ENCODE measurements at regions of chr19 and their contacts with region 1.

Region 1: GRCh38 chr19:588093-588740 is 1.5 kb upstream of the HCN2 start:
- DNase-seq: no peak
- H3K4me3 ChIP-seq: no peak overlapping the region
- CTCF ChIP-seq: peak; percentile 81

Region 2: DNA sequence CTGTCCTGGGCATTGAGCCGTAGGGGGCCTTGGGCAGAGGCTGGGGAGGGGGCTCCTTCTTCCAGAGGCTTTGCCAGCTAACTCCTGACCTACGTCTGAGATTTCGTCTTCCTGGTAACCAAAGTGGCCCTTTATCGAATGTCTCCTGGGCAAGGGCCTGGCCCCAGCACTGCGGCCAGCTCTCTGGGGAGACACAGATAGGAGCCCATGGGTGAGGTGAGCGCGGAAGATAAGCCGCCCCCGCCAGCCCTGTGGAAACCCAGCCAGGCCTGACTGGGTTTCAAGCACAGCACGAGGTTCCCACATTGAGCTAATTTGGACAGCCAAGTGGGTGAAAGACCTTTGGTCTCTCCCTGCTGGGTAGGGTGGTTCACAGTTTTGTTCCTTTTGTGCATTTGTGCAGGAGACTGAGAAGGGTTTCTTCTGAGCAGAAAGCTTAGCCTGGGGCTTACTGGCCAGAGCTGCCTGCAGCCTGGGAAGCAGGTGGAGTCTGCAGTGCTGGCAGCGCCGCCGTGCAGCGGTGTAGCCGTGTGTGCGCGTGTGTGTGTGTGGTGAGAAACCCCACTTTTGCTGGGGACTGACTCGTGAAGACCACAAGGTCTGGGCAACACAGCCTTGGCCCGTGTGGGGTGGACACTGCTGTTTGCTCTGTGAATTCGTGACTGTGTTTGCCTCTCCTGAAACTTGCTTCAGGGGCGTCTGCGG is 13.4 kb before region 1 on chr19:
- CTCF ChIA-PET with region 1: interaction called, 66 read pairs
- POLR2A ChIA-PET with region 1: interaction called, 4 read pairs
- DNase-seq: no peak
- H3K4me3 ChIP-seq: peak overlapping the region; percentile 44
- CTCF ChIP-seq: no peak

Region 3: DNA sequence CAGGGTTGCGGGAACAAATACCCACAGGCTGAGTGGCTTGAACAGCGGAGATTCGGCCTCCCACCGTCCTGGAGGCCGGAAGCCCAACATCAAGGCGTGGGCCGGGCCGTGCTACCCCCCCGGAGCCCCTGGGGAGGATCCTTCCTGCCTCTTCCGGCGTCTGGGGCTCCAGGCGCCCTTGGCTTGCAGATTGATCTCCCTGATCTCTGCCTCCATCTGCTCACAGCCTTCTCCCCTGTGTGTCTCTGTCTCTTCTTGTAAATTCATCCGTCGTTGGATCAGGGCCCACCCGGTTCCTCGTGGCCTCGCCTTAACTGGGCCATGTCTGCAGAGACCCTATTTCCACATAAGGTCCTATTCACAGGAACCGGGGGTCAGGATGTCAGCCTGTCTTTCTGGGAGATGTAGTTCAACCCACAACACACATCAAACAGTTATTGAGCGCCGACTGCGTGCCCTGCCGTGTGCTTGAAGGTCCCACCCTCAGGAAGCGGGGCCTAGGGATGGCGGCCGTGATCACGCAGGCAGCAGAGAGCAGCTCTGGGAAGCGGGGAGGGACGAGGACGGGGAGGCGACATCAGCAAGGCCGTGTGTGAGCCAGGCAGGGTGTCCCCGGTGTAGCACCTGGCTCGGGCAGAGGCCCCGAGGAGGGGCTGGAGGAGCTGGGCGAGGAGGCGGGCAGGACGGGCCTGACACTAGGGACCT is 22.7 kb after region 1 on chr19:
- CTCF ChIA-PET with region 1: interaction called, 11 read pairs
- POLR2A ChIA-PET with region 1: interaction called, 3 read pairs
- DNase-seq: peak; percentile 59
- H3K4me3 ChIP-seq: peak overlapping the region; percentile 21
- CTCF ChIP-seq: no peak

Region 4: DNA sequence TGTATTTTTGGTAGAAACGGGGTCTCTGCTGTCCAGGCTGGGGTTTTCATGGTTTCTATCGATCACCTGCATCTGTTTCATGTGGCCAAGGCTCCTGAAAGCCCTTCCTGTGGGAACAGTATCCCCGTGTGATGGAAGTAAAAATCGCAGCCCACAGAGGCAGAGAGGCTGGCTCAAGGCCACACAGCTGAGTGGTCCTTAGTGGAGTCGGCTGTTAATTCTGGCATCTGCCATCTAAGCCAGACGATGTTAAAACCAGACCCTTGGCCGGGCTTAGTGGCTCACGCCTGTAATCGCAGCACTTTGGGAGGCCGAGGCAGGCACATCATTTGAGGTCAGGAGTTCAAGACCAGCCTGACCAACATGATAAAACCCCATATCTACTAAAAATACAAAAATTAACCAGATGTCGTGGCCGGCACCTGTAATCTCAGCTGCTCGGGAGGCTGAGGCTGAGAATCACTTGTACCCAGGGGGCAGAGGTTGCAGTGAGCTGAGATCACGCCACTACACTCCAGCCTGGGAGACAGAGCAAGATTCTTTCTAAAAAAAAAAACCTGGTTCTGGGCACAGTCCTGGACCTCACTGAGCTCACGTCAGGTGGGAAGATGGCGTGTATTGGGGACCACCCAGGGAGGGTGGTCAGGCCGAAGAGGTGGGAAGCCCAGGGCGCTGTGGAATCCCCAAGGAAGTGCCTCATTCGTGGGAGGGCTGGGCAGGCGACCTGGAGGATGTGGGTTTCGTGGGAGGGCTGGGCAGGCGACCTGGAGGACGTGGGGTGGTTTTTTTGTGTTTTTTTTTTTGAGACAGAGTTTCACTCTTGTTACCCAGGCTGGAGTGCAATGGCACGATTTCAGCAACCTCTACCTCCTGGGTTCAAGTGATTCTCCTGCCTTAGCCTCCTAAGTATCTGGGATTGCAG is 144.2 kb after region 1 on chr19:
- CTCF ChIA-PET with region 1: interaction called, 11 read pairs
- POLR2A ChIA-PET with region 1: no interaction called
- DNase-seq: no peak
- H3K4me3 ChIP-seq: no peak overlapping the region
- CTCF ChIP-seq: no peak

Measured in AG04449 (cell line).